Activated B cell treated with CpG ODN at 0.5 μM for 24 hours (primary cell): ENCODE measurements at regions of chr2 and their contacts with region 1.

Region 1: GRCh38 chr2:64523666-64524603 is at the start of gene AFTPH:
- DNase-seq: peak; percentile 97
- ATAC-seq: peak; percentile 87
- H3K4me3 Mint-ChIP-seq: peak within 1 kb of the TSS; percentile 99
- H3K27ac Mint-ChIP-seq: peak within 1 kb of the TSS; percentile 100
- H3K4me1 Mint-ChIP-seq: peaks cover 46% of the 10 kb centered on the region
- H3K27me3 Mint-ChIP-seq: no peaks in the 10 kb centered on the region
- CTCF ChIP-seq: no peak
- total RNA-seq, gene AFTPH: 76.2 and 81.3 TPM in 2 replicates

Region 2: GRCh38 chr2:63841254-63842022 is 682.5 kb before region 1 on chr2 and contains the start of gene UGP2:
- CTCF ChIA-PET with region 1: no interaction called
- POLR2A ChIA-PET with region 1: interaction called, 4 read pairs
- intact Hi-C with region 1: loop called (anchors 2 kb)
- DNase-seq: peak; percentile 75
- ATAC-seq: peak; percentile 68
- H3K4me3 Mint-ChIP-seq: peak within 1 kb of the TSS; percentile 97
- H3K27ac Mint-ChIP-seq: peak within 1 kb of the TSS; percentile 97
- H3K4me1 Mint-ChIP-seq: peaks cover 53% of the 10 kb centered on the region
- H3K27me3 Mint-ChIP-seq: peaks cover 1% of the 10 kb centered on the region
- CTCF ChIP-seq: no peak
- total RNA-seq, gene UGP2: 69.8 and 73.5 TPM in 2 replicates

Region 3: GRCh38 chr2:64504774-64505720 is 18.9 kb before region 1 on chr2:
- CTCF ChIA-PET with region 1: no interaction called
- POLR2A ChIA-PET with region 1: no interaction called
- intact Hi-C with region 1: no loop called
- DNase-seq: no peak
- ATAC-seq: no peak
- H3K4me3 Mint-ChIP-seq: no peak overlapping the region
- H3K27ac Mint-ChIP-seq: no peak overlapping the region
- H3K4me1 Mint-ChIP-seq: no peaks in the 10 kb centered on the region
- H3K27me3 Mint-ChIP-seq: peaks cover 4% of the 10 kb centered on the region
- CTCF ChIP-seq: no peak

Region 4: DNA sequence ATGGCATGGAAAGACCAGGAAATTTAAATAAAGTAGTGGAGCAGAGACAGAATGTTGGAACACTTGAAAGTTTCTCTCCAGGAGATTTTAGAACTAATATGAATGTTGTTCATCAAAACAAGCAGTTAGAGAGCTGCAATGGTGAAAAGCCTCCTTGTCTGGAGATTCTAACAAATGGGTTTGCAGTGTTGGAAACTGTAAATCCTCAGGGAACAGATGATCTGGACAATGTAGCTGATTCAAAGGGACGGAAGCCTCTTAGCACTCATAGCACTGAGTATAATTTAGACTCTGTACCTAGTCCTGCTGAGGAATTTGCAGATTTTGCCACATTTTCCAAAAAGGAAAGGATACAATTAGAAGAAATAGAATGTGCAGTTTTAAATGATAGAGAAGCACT is 27.9 kb after region 1 on chr2:
- CTCF ChIA-PET with region 1: interaction called, 20 read pairs
- POLR2A ChIA-PET with region 1: interaction called, 5 read pairs
- intact Hi-C with region 1: no loop called
- DNase-seq: no peak
- ATAC-seq: no peak
- H3K4me3 Mint-ChIP-seq: no peak overlapping the region
- H3K27ac Mint-ChIP-seq: no peak overlapping the region
- H3K4me1 Mint-ChIP-seq: peaks cover 24% of the 10 kb centered on the region
- H3K27me3 Mint-ChIP-seq: no peaks in the 10 kb centered on the region
- CTCF ChIP-seq: no peak

Region 5: GRCh38 chr2:64644177-64645004 is 120.5 kb after region 1 on chr2:
- CTCF ChIA-PET with region 1: interaction called, 12 read pairs
- POLR2A ChIA-PET with region 1: interaction called, 22 read pairs
- intact Hi-C with region 1: loop called (anchors 2 kb)
- DNase-seq: peak; percentile 48
- ATAC-seq: peak; percentile 45
- H3K4me3 Mint-ChIP-seq: peak overlapping the region; percentile 86
- H3K27ac Mint-ChIP-seq: peak overlapping the region; percentile 93
- H3K4me1 Mint-ChIP-seq: peaks cover 96% of the 10 kb centered on the region
- H3K27me3 Mint-ChIP-seq: no peaks in the 10 kb centered on the region
- CTCF ChIP-seq: no peak

Region 6: GRCh38 chr2:64865073-64865830 is 341.3 kb after region 1 on chr2:
- CTCF ChIA-PET with region 1: interaction called, 13 read pairs
- POLR2A ChIA-PET with region 1: interaction called, 22 read pairs
- intact Hi-C with region 1: loop called (anchors 1 kb)
- DNase-seq: peak; percentile 76
- ATAC-seq: peak; percentile 56
- H3K4me3 Mint-ChIP-seq: peak overlapping the region; percentile 41
- H3K27ac Mint-ChIP-seq: no peak overlapping the region
- H3K4me1 Mint-ChIP-seq: peaks cover 6% of the 10 kb centered on the region
- H3K27me3 Mint-ChIP-seq: no peaks in the 10 kb centered on the region
- CTCF ChIP-seq: no peak

Region 7: GRCh38 chr2:65056215-65057053 is 532.5 kb after region 1 on chr2 and contains the start of gene CEP68:
- CTCF ChIA-PET with region 1: interaction called, 5 read pairs
- POLR2A ChIA-PET with region 1: interaction called, 9 read pairs
- intact Hi-C with region 1: loop called (anchors 1 kb)
- DNase-seq: peak; percentile 95
- ATAC-seq: peak; percentile 91
- H3K4me3 Mint-ChIP-seq: peak within 1 kb of the TSS; percentile 97
- H3K27ac Mint-ChIP-seq: peak within 1 kb of the TSS; percentile 95
- H3K4me1 Mint-ChIP-seq: peaks cover 75% of the 10 kb centered on the region
- H3K27me3 Mint-ChIP-seq: no peaks in the 10 kb centered on the region
- CTCF ChIP-seq: no peak
- total RNA-seq, gene CEP68: 16.6 and 17.9 TPM in 2 replicates